ENCODE measurements at regions of chr9 and their contacts with region 1.

Region 1: DNA sequence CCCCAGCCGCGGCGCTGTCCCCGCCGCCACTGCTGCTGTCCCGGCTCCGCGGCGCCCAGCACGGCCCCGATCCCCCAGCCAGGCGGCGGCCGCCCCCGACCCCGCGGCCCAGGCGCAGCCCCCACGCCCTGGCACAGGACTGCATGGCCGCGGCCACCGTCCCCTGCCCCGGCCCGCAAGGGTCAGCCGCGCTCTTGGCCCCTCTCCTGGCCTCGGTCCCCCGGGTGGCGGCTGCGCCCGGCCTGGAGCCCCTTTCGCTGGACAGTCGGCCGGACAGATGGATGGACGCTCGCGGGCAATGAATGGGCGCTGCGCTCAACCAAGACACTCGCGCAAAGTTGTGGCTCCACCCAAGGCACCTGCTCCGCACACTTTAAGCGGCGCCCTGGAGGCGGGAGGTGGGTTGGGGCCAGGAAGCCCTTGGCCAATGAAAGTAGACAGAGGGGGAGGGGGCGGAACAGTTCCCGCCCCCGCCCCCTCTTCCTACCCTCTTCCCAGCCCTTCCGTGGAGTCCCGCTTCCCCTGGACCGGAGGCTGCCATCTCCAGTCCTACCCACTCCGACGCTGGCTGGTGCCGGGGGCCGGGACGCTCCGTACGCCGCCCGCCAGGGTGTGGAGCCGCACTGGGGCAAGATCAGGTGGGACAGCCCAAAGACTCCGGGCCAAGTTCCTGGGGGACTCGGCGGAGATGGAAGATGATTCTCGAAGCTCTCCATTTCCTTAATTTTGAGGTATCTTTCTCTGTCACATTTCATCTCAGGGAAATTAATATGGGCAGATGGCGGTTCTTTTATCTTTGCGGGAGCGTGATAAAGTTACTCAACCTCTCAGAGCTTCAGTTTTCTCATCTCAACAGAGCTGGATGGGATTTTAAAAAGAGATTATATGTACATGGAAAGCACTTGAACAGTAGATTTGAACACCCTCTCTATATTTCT is at the start of gene GLDC:
- DNase-seq: peak; percentile 78 to 84
- H3K4me3 ChIP-seq: peak within 1 kb of the TSS; percentile 84 to 92 (median 89)
- H3K27ac ChIP-seq: no peak within 1 kb of the TSS
- H3K4me1 ChIP-seq: peaks cover 3 to 12% (median 6%) of the 10 kb centered on the region in 4 experiments; a peak in 6 of 7 replicates
- H3K27me3 ChIP-seq: peaks cover 0 to 11% (median 7%) of the 10 kb centered on the region in 4 experiments; a peak in 5 of 7 replicates
- CTCF ChIP-seq: no peak
- EP300 ChIP-seq: no peak
- POLR2A ChIP-seq: peak; percentile 31 to 69
- RAD21 ChIP-seq: no peak
- total RNA-seq, gene GLDC: 89.9 and 101 TPM in 2 replicates

Region 2: GRCh38 chr9:6384732-6385131 is 260.9 kb before region 1 on chr9:
- CTCF ChIA-PET with region 1: no interaction called
- POLR2A ChIA-PET with region 1: no interaction called
- DNase-seq: no peak
- H3K4me3 ChIP-seq: no peak overlapping the region
- H3K27ac ChIP-seq: no peak overlapping the region
- H3K4me1 ChIP-seq: 0 out of 7 replicates have a peak, but pooled peaks cover 0 to 3% (median 0%) of the 10 kb centered on the region in 4 experiments
- H3K27me3 ChIP-seq: no peaks in the 10 kb centered on the region
- CTCF ChIP-seq: no peak
- EP300 ChIP-seq: no peak
- POLR2A ChIP-seq: no peak
- RAD21 ChIP-seq: no peak

Region 3: DNA sequence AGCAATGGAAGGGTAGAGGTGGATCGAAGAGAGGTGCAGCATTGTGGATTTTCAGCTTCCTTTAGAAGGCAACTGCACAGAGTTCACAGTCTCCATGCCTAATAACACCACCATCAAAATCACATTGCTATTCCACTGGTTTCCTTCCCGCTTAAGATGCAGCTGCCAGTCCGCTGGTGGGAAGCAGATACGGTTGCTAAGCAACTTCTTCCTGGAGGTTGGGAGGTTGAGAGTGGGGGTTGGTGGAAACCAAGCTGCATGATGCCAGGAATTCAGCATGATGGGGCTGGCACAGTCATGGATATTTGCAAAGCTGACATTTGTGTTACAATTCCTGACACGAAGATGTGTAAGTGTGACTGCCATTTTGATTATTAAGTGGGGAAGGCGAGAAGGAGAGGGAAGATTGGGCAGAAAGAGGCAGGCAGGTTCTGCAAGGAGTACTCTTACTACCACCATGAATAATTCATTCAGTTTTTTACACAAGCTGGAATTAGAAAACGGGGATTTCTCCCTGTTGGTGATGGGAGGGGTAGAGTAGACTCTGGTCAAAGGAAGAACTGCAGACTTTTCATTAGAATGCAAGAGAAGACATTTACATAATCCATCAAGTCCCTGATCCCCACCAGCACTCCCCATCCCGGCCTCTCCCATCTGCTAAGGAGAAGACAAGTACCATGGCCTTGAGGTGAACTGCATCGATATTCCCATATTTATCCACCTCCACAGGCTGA is 87.6 kb before region 1 on chr9:
- CTCF ChIA-PET with region 1: no interaction called
- POLR2A ChIA-PET with region 1: no interaction called
- DNase-seq: no peak
- H3K4me3 ChIP-seq: no peak overlapping the region
- H3K27ac ChIP-seq: no peak overlapping the region
- H3K4me1 ChIP-seq: peaks cover 0 to 5% (median 2%) of the 10 kb centered on the region in 4 experiments; a peak in 2 of 7 replicates
- H3K27me3 ChIP-seq: no peaks in the 10 kb centered on the region
- CTCF ChIP-seq: no peak
- EP300 ChIP-seq: no peak
- POLR2A ChIP-seq: no peak
- RAD21 ChIP-seq: no peak

Region 4: GRCh38 chr9:6656614-6657300 is 11.1 kb after region 1 on chr9:
- CTCF ChIA-PET with region 1: interaction called, 3 read pairs
- POLR2A ChIA-PET with region 1: interaction called, 11 read pairs
- DNase-seq: no peak
- H3K4me3 ChIP-seq: no peak overlapping the region
- H3K27ac ChIP-seq: no peak overlapping the region
- H3K4me1 ChIP-seq: no peaks in the 10 kb centered on the region; a peak in 1 of 7 replicates
- H3K27me3 ChIP-seq: no peaks in the 10 kb centered on the region
- CTCF ChIP-seq: no peak
- EP300 ChIP-seq: no peak
- POLR2A ChIP-seq: no peak
- RAD21 ChIP-seq: no peak

Measured in H1 (cell line).